ENCODE measurements at regions of chr19 and their contacts with region 1.

Region 1: GRCh38 chr19:1113033-1113985 is 9.5 kb downstream of the GPX4 start:
- H3K4me3 ChIP-seq: no peak overlapping the region
- H3K27ac ChIP-seq: no peak overlapping the region
- H3K4me1 ChIP-seq: peaks cover 4% of the 10 kb centered on the region; the same call in 1 of the 2 replicates
- CTCF ChIP-seq: peak; percentile 91

Region 2: GRCh38 chr19:947265-948036 is 165.9 kb before region 1 on chr19:
- CTCF ChIA-PET with region 1: no interaction called
- POLR2A ChIA-PET with region 1: no interaction called
- H3K4me3 ChIP-seq: no peak overlapping the region
- H3K27ac ChIP-seq: no peak overlapping the region
- H3K4me1 ChIP-seq: no peaks in the 10 kb centered on the region
- CTCF ChIP-seq: no peak

Region 3: GRCh38 chr19:1189419-1189818 is 76.1 kb after region 1 on chr19:
- CTCF ChIA-PET with region 1: interaction called, 40 read pairs
- POLR2A ChIA-PET with region 1: interaction called, 3 read pairs
- H3K4me3 ChIP-seq: no peak overlapping the region
- H3K27ac ChIP-seq: no peak overlapping the region
- H3K4me1 ChIP-seq: no peaks in the 10 kb centered on the region
- CTCF ChIP-seq: no peak

Region 4: DNA sequence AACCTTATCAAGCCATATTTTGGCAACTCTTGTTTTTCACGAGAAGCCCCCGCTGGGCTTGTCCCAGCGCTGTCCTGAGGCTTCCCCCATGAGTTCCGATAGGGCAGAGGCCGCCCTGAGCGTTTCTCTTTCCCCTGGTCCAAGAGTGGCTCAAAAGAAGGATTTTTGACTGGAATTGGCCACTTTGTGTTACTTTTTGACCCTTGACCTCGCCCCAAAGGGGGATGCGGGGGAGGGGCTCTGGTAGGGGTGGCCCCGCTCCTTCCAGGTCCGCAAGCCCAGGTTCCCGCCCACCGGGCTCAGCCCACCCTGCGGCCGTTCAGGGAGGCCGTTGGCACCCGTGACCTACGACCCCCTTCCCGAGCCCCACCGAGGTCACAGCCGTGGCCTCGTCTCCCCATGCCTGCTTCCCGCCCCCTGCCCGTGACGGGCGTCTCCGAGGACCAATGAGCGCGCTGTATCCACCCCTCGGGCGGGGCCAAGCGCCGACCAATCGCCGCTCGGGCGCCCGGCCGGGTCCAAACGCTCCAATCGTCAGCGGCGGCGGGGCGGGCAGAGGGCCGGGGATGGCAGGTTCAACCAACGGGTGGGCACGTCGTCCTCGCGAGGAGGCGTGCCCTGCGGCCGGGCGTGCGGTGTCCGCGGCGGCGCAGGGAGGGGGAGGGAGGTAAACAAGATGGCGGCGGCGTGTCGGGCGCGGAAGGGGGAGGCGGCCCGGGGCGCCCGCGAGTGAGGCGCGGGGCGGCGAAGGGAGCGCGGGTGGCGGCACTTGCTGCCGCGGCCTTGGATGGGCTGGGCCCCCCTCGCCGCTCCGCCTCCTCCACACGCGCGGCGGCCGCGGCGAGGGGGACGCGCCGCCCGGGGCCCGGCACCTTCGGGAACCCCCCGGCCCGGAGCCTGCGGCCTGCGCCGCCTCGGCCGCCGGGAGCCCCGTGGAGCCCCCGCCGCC is 92.1 kb after region 1 on chr19 and contains the start of gene STK11:
- CTCF ChIA-PET with region 1: interaction called, 12 read pairs
- POLR2A ChIA-PET with region 1: interaction called, 7 read pairs
- H3K4me3 ChIP-seq: peak within 1 kb of the TSS; percentile 53
- H3K27ac ChIP-seq: peak within 1 kb of the TSS; percentile 99
- H3K4me1 ChIP-seq: peaks cover 7% of the 10 kb centered on the region
- CTCF ChIP-seq: no peak

Region 5: DNA sequence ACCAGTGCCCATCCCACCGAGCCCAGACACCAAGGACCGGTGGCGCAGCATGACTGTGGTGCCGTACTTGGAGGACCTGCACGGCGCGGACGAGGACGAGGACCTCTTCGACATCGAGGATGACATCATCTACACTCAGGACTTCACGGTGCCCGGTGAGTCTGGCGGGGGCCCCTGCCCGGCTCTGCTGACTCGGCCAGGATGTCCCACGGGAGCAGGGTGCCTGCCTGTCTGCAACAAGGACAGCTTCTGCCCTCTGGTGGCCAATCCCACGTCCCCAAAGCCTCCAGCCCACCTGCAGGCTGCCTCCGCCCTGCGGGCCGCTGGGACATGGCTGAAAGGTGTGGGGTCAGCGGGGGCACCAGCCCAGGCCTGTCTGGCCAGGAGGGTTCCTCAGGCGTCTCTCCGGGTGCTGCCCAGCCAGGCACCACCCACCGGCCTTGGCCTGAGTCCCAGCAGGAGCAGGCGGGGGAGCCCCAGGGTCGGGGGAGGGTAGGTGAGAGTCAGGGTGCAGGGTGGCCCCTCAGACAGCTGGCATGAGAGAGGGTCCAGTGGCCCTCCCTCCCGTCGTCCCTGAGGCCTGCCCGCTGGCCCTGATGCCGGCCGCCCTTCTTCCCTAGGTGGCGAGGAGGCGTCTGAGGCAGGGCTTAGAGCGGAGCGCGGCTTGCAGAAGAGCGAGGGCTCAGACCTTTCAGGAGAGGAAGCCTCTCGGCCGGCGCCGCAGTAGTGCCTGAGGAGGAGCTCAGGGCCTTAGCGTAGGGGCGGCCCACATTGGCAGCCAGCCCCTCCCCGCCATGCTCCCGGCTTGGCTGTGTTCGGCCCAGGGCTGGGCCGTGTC is 109.9 kb after region 1 on chr19:
- CTCF ChIA-PET with region 1: interaction called, 14 read pairs
- POLR2A ChIA-PET with region 1: interaction called, 3 read pairs
- H3K4me3 ChIP-seq: no peak overlapping the region
- H3K27ac ChIP-seq: peak overlapping the region; percentile 17; the same call in 1 of the 2 replicates
- H3K4me1 ChIP-seq: no peaks in the 10 kb centered on the region
- CTCF ChIP-seq: peak; percentile 79